Activated CD4-positive, alpha-beta T cell treated with anti-CD3 and anti-CD28 coated beads for 36 hours (primary cell): ENCODE measurements at regions of chr22 and their contacts with region 1.

Region 1: DNA sequence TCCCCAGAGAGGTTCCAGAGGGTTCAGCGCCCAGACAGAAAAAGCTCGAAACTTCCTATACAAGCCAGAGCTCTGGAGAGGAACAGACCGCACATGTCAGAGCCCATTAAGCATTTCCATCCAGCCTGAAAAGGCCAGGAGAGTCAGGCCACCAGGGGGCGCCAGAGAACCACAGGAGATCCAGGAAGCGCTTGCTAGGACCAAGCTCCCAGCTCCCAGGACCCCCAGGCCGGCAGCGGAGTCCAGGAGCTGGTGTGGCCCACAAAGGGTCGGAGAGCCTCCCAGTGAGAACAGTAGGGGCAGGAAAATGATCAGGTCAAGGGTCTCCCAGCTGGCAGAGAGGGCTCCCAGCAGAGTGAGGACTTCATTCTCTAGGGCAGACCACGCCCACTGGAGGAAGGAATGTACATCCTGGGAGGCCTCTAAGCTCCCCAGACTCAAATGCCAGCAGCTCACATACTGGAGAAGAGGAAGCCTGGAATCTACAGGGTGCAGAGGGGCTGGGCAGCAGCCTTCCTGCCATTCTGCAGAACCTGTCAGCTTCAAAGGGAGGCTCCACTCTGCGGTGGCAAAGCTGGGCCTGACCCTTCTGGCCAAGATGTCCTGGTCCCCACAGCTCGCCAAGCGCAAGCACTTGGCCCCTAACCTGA is 2.1 kb upstream of the MEI1 start:
- DNase-seq: peak; percentile 96
- ATAC-seq: peak; percentile 79
- H3K4me3 Mint-ChIP-seq: no peak overlapping the region
- H3K27ac Mint-ChIP-seq: peak overlapping the region; percentile 77
- H3K4me1 Mint-ChIP-seq: peaks cover 11% of the 10 kb centered on the region
- H3K27me3 Mint-ChIP-seq: no peaks in the 10 kb centered on the region

Region 2: DNA sequence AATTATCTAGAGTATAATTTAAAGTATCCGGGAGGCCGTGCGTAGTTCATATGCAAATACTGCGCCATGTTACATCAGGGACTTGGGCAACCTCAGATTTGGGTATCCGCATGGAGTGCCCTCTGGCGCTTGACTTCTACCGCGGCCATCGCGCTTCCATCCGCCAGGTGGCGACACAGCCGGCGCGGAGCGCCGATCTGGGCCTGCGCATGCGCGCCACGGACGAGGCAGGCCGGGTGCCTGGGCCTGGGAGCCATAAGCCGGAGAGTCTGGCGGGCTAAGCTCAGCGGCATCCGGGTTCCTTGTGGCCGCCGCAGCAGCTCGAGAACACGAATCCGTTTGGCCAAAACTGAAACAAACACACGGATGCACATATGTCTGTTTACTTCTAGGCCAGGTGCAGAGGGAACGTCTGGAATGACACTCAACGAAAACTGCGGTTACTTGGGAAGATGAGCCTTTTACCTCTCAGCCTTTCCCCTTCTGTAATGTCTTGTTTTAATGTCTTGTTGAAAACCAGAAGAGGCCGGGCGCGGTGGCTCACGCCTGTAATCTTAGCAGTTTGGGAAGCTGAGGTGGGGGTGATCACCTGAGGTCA is 30.5 kb before region 1 on chr22:
- CTCF ChIA-PET with region 1: interaction called, 24 read pairs
- POLR2A ChIA-PET with region 1: no interaction called
- intact Hi-C with region 1: no loop called
- DNase-seq: peak; percentile 96
- ATAC-seq: peak; percentile 94
- H3K4me3 Mint-ChIP-seq: peak overlapping the region; percentile 76
- H3K27ac Mint-ChIP-seq: peak overlapping the region; percentile 95
- H3K4me1 Mint-ChIP-seq: peaks cover 13% of the 10 kb centered on the region
- H3K27me3 Mint-ChIP-seq: no peaks in the 10 kb centered on the region

Region 3: GRCh38 chr22:41746567-41747400 is 49.5 kb after region 1 on chr22:
- CTCF ChIA-PET with region 1: interaction called, 13 read pairs
- POLR2A ChIA-PET with region 1: no interaction called
- intact Hi-C with region 1: no loop called
- DNase-seq: peak; percentile 74
- ATAC-seq: peak; percentile 98
- H3K4me3 Mint-ChIP-seq: no peak overlapping the region
- H3K27ac Mint-ChIP-seq: no peak overlapping the region
- H3K4me1 Mint-ChIP-seq: peaks cover 3% of the 10 kb centered on the region
- H3K27me3 Mint-ChIP-seq: peaks cover 6% of the 10 kb centered on the region

Region 4: DNA sequence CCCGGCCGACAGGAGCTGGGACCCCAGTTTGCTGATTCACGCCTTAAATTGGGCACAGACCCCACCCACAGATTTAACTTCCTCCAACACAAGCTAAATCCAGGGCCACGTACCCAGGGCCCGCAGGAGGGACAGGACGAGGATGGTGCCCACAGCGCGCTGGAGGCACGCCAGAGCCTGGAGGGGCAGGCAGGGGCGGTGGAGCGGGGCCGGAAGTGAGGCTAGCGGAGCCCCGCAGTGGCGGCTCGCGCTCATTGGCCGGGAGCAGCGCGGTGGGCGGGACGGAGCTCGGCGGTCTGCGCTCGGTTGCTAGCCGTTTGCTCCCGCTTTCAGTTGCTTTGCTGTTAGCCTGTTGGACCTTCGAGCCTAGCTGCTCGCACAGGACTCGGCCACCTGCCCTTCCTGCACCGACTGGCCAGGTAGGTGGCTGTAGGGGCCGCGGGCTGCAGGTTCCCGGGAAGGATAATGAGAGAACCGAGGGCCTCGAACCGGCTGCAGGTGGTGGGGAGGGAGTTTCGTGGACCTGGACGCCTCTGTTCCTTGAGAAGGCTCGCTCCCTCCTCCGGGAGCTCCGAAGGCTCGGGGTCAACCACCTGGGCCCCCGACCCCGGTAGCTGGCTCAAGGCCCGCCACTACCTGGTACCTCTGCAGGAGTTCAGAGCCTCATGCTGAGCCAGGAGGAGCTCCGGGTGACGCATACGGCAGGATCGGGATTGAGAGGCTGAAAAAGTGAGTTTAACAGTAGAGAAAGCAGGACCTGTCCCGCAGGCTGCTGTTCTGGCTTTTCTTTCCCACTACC is 103.3 kb after region 1 on chr22 and contains the start of gene CCDC134:
- CTCF ChIA-PET with region 1: interaction called, 39 read pairs
- POLR2A ChIA-PET with region 1: interaction called, 8 read pairs
- intact Hi-C with region 1: loop called (anchors 1 to 2 kb)
- DNase-seq: peak; percentile 95
- ATAC-seq: peak; percentile 98
- H3K4me3 Mint-ChIP-seq: peak within 1 kb of the TSS; percentile 91
- H3K27ac Mint-ChIP-seq: peak within 1 kb of the TSS; percentile 96
- H3K4me1 Mint-ChIP-seq: peaks cover 38% of the 10 kb centered on the region
- H3K27me3 Mint-ChIP-seq: no peaks in the 10 kb centered on the region
- total RNA-seq, gene CCDC134: 14.7 to 15.2 TPM

Region 5: DNA sequence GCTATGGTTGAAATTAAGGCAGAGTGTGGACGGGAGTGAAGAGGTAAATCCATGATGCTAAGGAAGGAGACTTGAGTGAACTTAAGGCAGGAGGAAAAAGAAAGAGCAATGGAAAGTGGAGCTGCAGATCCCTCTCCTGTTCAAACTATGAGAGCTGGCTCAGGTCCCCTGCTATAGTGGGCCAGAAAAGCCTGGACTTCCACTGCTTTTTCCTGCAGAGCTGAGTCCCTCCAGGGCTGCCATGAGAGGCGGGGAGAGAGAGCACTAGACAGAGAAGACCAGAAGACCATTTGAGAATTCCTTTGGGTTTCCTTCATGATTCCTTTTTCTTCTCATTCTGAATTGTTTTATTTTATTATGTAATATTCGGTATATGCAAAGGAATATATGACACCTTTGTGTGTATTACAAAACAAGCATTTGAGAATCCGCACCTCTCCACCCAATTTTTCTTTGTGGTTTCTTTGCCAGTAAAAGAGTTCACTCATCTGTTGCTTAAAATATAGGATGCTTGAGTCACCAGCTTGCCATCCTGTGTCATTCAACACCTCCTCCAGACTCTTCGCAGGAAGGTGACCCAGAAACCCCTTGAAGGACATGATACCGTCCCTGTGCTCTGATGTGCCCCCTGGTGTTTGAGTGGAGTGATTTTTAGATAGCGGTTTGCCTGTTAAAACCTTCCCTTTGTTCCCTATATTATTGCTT is 160.1 kb after region 1 on chr22:
- CTCF ChIA-PET with region 1: interaction called, 18 read pairs
- POLR2A ChIA-PET with region 1: interaction called, 3 read pairs
- intact Hi-C with region 1: loop called in 1 of 2 experiments (anchors 5 kb)
- DNase-seq: peak; percentile 89
- ATAC-seq: peak; percentile 71
- H3K4me3 Mint-ChIP-seq: no peak overlapping the region
- H3K27ac Mint-ChIP-seq: peak overlapping the region; percentile 95
- H3K4me1 Mint-ChIP-seq: peaks cover 76% of the 10 kb centered on the region
- H3K27me3 Mint-ChIP-seq: no peaks in the 10 kb centered on the region

Region 6: GRCh38 chr22:41957941-41958556 is 260.8 kb after region 1 on chr22:
- CTCF ChIA-PET with region 1: interaction called, 6 read pairs
- POLR2A ChIA-PET with region 1: no interaction called
- intact Hi-C with region 1: loop called in 1 of 2 experiments (anchors 1 kb)
- DNase-seq: no peak
- ATAC-seq: peak; percentile 25
- H3K4me3 Mint-ChIP-seq: no peak overlapping the region
- H3K27ac Mint-ChIP-seq: no peak overlapping the region
- H3K4me1 Mint-ChIP-seq: peaks cover 2% of the 10 kb centered on the region
- H3K27me3 Mint-ChIP-seq: no peaks in the 10 kb centered on the region